Sciatic nerve (tissue), 2 donors: ENCODE measurements at regions of chr6 and their contacts with region 1.

Region 1: DNA sequence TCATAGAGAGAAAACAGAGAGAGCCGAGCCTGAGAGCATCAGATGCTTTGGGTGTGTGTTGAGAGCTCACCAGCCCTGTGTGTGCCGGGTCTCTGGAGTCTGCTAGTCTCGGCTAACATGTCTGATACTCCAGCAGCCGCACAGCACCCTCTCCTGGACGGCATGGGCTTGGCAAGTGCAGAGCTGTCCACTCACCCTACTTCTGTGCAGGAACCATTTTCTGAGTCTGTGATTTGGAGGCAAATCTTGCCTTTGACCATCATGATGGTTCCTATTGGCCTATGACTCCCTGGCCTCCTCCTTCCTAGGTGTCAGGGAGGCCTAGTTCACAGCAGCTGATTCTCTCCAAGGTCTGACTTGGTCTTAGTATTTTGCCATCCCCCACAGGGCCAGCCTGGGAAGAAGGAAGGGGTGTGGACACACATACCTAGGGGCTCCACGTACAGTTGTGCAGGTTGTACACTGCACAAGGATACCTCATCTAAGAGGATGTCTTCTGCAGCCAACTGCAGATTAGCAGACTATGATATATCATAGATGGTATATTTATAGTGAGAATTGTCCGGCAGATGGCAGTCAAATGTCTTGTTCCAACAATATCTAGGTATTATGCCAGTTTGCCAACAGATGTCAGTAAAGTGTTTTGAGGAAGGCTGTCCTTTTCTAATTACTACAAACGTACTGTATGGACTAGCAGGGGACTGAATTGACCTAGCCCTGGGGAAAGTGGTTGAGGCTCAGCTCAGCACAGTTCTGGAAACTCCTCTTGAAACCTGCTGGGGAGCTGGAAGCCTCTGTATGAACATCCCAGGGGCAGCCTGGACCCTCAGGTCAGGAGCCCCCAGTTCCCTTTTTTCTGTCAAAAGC is 13.0 kb downstream of the FGD2 start:
- DNase-seq: peak; percentile 96
- ATAC-seq: peak; percentile 98

Region 2: GRCh38 chr6:36765594-36766398 is 252.6 kb before region 1 on chr6:
- intact Hi-C with region 1: loop called (anchors 10 kb)
- DNase-seq: peak; percentile 93
- ATAC-seq: peak; percentile 91

Region 3: GRCh38 chr6:36885461-36886401 is 132.7 kb before region 1 on chr6 and contains the start of gene C6orf89:
- intact Hi-C with region 1: loop called (anchors 10 kb)
- DNase-seq: peak; percentile 98
- ATAC-seq: peak; percentile 100
- total RNA-seq, gene C6orf89: 56.6 TPM

Region 4: DNA sequence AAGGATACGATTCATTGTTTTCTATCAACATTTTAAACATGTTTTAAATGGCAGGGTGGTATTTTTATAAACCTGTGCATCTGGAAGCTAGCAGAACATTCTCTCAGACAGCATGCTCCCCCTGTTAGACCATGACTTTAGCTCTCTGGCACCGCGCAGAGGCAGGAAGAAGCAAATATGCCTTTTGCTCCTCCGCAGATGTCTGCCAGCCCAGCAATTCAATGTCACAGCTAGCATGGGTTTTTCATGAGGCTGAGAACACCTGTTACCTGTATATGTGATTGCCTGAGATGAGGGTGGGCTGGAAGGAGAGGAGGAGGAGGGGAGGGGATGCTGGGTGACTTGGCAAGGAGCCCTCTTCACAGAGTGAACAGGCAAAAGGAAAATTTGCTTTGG is 39.1 kb before region 1 on chr6:
- intact Hi-C with region 1: loop called (anchors 5 kb)
- DNase-seq: peak; percentile 76
- ATAC-seq: peak; percentile 86

Region 5: DNA sequence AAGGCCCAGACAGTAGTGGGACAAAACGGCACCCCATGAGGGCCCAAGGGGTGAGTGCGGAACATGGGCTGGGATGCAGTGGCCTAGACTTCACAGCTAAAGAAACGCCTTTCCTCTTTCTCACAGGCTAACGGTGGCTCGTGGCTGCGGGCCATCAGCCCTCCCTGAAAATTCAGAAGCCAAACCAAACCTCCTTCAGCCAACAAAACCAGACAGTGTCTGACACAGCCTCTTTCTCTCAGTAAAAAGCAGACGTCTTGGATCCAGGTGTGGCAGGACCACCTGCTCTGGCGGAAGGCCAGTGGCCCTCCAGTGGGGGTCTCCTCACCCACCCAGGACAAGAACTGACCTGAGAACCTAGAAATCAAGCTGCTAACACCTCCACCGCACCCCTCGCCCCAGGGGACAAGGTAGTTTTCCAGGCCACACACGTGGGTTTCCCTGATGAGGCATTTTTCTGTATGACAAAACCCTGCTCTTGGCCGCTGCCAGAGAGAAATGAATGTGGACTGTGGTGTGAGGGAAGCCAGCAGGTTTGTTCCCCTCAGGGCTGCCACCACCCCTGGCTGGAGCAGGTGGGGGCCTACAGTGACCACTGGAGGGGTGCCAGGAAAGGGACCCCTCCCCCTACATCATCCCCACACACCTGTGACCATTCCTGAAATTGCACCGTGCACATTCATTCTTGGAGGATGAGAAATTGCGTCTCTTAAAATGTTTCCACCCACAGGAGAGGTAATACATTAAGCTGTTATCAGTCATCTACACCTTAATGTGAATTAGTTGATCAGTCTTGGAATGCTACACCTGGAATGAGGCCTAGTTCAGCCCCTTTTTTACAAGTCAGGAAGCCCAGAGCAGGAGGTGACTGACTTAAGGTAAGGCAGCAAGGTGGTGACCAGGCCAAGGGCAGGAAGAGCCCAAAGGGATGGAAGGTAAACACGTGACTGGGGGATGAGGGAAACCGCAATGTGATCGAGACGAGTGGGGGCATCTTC is 74.8 kb after region 1 on chr6:
- intact Hi-C with region 1: no loop called
- DNase-seq: peak; percentile 62
- ATAC-seq: peak; percentile 61

Region 6: DNA sequence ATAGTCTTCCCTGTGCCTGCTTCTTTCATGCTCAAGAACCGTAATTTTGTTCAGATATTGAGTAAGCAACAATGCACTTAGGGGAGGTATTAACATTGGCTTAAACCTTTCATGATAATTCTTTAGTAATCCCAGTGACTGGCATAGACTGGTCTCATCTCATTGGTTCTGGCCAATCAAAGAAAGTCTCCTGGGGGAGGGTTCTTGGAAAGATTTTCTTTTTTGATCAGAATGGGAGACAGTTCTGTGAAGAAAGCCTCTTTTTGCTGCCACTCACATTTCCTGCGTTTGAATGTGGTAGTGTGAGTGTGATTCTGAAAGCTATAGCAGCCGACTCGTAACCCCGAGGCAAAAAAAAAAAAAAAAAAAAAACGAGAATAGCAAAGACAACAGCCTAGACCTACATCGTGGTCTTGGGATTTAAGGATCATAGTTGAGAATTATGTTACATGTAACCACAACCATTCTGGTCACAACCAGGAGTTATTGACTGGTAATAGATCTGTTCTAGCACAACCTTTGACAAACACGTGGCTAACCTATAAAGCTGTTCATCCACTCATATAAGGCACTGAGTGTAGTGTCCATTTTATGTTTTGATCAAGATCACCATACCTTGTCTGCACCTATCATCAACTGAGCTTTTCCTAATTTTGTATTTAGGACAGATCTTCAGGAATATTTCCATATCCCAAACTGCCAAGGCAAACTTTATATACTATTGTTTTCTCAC is 254.6 kb after region 1 on chr6:
- intact Hi-C with region 1: no loop called
- DNase-seq: no peak
- ATAC-seq: no peak